ENCODE measurements at regions of chr10 and their contacts with region 1.

Region 1: DNA sequence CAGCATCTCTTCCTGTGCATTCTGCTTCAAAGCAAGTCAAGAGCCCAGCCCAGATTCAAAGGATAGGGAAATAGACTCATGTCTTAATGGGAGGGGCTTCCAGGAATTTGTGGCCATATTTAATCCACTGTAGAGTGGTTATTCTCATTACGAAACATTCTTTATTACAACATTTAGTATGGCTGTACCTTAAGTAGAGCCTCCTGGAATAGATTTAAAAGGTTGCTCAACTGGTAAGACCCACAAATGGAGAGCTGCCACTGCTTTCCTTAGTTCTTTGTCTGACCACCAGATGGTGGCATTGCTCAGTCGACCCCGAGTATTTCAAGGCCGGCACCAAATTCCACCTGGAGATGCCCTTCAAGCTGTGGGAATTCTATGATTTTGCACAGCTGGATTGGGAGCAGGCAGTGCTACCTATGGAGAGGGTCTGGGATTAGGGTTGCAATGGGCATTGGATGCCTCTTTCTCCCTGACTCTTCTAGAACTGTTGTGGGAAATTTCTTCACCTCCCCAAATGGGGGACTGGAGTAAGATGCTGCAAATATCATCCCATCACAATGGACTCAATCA is 102.2 kb downstream of the RBM20 start:
- DNase-seq: peak; percentile 81
- H3K4me3 ChIP-seq: no peak overlapping the region
- H3K27ac ChIP-seq: no peak overlapping the region
- H3K4me1 ChIP-seq: peaks cover 23% of the 10 kb centered on the region
- H3K27me3 ChIP-seq: peaks cover 2 to 5% of the 10 kb centered on the region in 2 experiments
- CTCF ChIP-seq: peak; percentile 63 to 71
- POLR2A ChIP-seq: no peak

Region 2: GRCh38 chr10:110311357-110311949 is 434.9 kb before region 1 on chr10:
- CTCF ChIA-PET with region 1: interaction called, 3 read pairs
- POLR2A ChIA-PET with region 1: no interaction called
- dilution Hi-C with region 1: no loop called
- intact Hi-C with region 1: loop called (anchors 1 kb)
- DNase-seq: peak; percentile 65
- H3K4me3 ChIP-seq: peak overlapping the region in 1 of 3 experiments; percentile 33
- H3K27ac ChIP-seq: peak overlapping the region; percentile 72
- H3K4me1 ChIP-seq: peaks cover 47% of the 10 kb centered on the region
- H3K27me3 ChIP-seq: no peaks in the 10 kb centered on the region
- CTCF ChIP-seq: peak; percentile 54 to 55
- POLR2A ChIP-seq: no peak

Region 3: GRCh38 chr10:110803830-110804338 is 57.5 kb after region 1 on chr10:
- CTCF ChIA-PET with region 1: interaction called, 14 read pairs
- POLR2A ChIA-PET with region 1: no interaction called
- dilution Hi-C with region 1: no loop called
- intact Hi-C with region 1: loop called (anchors 5 kb)
- DNase-seq: peak; percentile 36
- H3K4me3 ChIP-seq: no peak overlapping the region
- H3K27ac ChIP-seq: no peak overlapping the region
- H3K4me1 ChIP-seq: peaks cover 3% of the 10 kb centered on the region
- H3K27me3 ChIP-seq: peaks cover 3% of the 10 kb centered on the region in 2 experiments
- CTCF ChIP-seq: peak in 1 of 2 donors; percentile 62
- POLR2A ChIP-seq: no peak

Region 4: GRCh38 chr10:110885932-110886674 is 139.8 kb after region 1 on chr10:
- CTCF ChIA-PET with region 1: interaction called, 17 read pairs
- POLR2A ChIA-PET with region 1: no interaction called
- dilution Hi-C with region 1: no loop called
- intact Hi-C with region 1: no loop called
- DNase-seq: no peak
- H3K4me3 ChIP-seq: no peak overlapping the region
- H3K27ac ChIP-seq: no peak overlapping the region
- H3K4me1 ChIP-seq: no peaks in the 10 kb centered on the region
- H3K27me3 ChIP-seq: no peaks in the 10 kb centered on the region
- CTCF ChIP-seq: no peak
- POLR2A ChIP-seq: no peak

Region 5: GRCh38 chr10:111076191-111076681 is 329.9 kb after region 1 on chr10:
- CTCF ChIA-PET with region 1: interaction called, 6 read pairs
- POLR2A ChIA-PET with region 1: no interaction called
- dilution Hi-C with region 1: no loop called
- intact Hi-C with region 1: loop called (anchors 2 kb)
- DNase-seq: peak; percentile 41
- H3K4me3 ChIP-seq: peak overlapping the region; percentile 23 to 50 (median 29)
- H3K27ac ChIP-seq: no peak overlapping the region
- H3K4me1 ChIP-seq: peaks cover 17% of the 10 kb centered on the region
- H3K27me3 ChIP-seq: peaks cover 40 to 71% of the 10 kb centered on the region in 2 experiments
- CTCF ChIP-seq: peak; percentile 68 to 92
- POLR2A ChIP-seq: no peak

Region 6: GRCh38 chr10:112140110-112140970 is 1394.0 kb after region 1 on chr10:
- CTCF ChIA-PET with region 1: interaction called, 49 read pairs
- POLR2A ChIA-PET with region 1: no interaction called
- dilution Hi-C with region 1: no loop called
- intact Hi-C with region 1: loop called (anchors 1 kb)
- DNase-seq: peak; percentile 67
- H3K4me3 ChIP-seq: no peak overlapping the region
- H3K27ac ChIP-seq: no peak overlapping the region
- H3K4me1 ChIP-seq: no peaks in the 10 kb centered on the region
- H3K27me3 ChIP-seq: no peaks in the 10 kb centered on the region
- CTCF ChIP-seq: peak; percentile 90 to 91
- POLR2A ChIP-seq: no peak